Dendritic cell treated with granulocyte-macrophage colony-stimulating factor and Interleukin-4, amounts not matched to agents 40 ng/mL and 50 ng/mL, for 4 days (primary cell): ENCODE measurements at regions of chr5 and their contacts with region 1.

Region 1: GRCh38 chr5:154761046-154761736 is 6.0 kb downstream of the LARP1 start:
- H3K4me3 Mint-ChIP-seq: no peak overlapping the region
- H3K27ac Mint-ChIP-seq: peak overlapping the region; percentile 21
- H3K4me1 Mint-ChIP-seq: peaks cover 73% of the 10 kb centered on the region
- H3K27me3 Mint-ChIP-seq: no peaks in the 10 kb centered on the region

Region 2: GRCh38 chr5:154541553-154541952 is 219.6 kb before region 1 on chr5:
- intact Hi-C with region 1: no loop called
- H3K4me3 Mint-ChIP-seq: no peak overlapping the region
- H3K27ac Mint-ChIP-seq: no peak overlapping the region
- H3K4me1 Mint-ChIP-seq: peaks cover 25% of the 10 kb centered on the region
- H3K27me3 Mint-ChIP-seq: peaks cover 3% of the 10 kb centered on the region

Region 3: GRCh38 chr5:154811653-154812365 is 50.6 kb after region 1 on chr5:
- intact Hi-C with region 1: loop called (anchors 10 kb)
- H3K4me3 Mint-ChIP-seq: no peak overlapping the region
- H3K27ac Mint-ChIP-seq: peak overlapping the region; percentile 69
- H3K4me1 Mint-ChIP-seq: peaks cover 24% of the 10 kb centered on the region
- H3K27me3 Mint-ChIP-seq: no peaks in the 10 kb centered on the region